Head of caudate nucleus (tissue), 42 donors: ENCODE measurements at regions of chr20 and their contacts with region 1.

Region 1: GRCh38 chr20:17431621-17432364 is 99.4 kb downstream of the BFSP1 start:
- DNase-seq: peak; percentile 38 to 89 (median 76)

Region 2: GRCh38 chr20:16801919-16802911 is 629.6 kb before region 1 on chr20:
- intact Hi-C with region 1: loop called (anchors 2 kb)
- DNase-seq: peak; percentile 45 to 92 (median 80)

Region 3: DNA sequence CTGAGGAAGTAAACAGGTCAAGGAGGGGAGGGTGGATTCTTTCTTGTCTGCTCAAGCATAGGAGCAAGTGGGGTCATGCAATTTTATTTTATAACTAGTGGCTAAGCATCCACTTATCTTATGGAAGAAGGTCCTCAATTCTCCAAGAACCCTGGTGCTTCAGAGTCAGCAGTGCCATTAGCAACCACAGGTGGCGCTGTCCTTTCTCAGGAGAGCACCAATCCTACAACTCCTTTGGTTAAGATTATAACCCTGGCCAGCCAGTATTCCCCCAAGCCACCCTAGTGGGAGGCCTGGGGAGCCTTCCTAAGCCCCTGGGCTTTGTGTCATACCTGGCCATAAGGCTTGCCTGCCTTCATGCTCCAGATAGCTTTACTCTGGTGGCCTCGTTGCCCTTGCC is 144.3 kb before region 1 on chr20:
- intact Hi-C with region 1: no loop called
- DNase-seq: no peak